ENCODE measurements at regions of chr5 and their contacts with region 1.

Region 1: GRCh38 chr5:66144074-66144833 is at the start of gene SREK1:
- DNase-seq: peak; percentile 84 to 90 (median 89)
- ATAC-seq: peak; percentile 91
- H3K4me3 ChIP-seq: peak within 1 kb of the TSS; percentile 80
- H3K4me3 Mint-ChIP-seq: peak within 1 kb of the TSS; percentile 91 to 100 (median 98)
- H3K27ac ChIP-seq: peak within 1 kb of the TSS; percentile 98
- H3K27ac Mint-ChIP-seq: peak within 1 kb of the TSS; percentile 99 to 100 (median 100)
- H3K4me1 ChIP-seq: peaks cover 21 to 34% of the 10 kb centered on the region in 2 donors
- H3K4me1 Mint-ChIP-seq: peaks cover 22 to 60% (median 47%) of the 10 kb centered on the region in 7 donors
- H3K27me3 ChIP-seq: no peaks in the 10 kb centered on the region
- H3K27me3 Mint-ChIP-seq: no peaks in the 10 kb centered on the region
- total RNA-seq, gene SREK1: 68.2 to 143 (median 85.8) TPM

Region 2: GRCh38 chr5:64768358-64769312 is 1375.6 kb before region 1 on chr5 and contains the starts of genes CWC27 and SREK1IP1:
- CTCF ChIA-PET with region 1: no interaction called
- POLR2A ChIA-PET with region 1: no interaction called
- intact Hi-C with region 1: loop called in 1 of 2 experiments (anchors 5 kb)
- DNase-seq: peak; percentile 65 to 88 (median 83)
- ATAC-seq: peak; percentile 98
- H3K4me3 ChIP-seq: peak within 1 kb of the TSS; percentile 90
- H3K4me3 Mint-ChIP-seq: peak within 1 kb of the TSS; percentile 94 to 100 (median 99)
- H3K27ac ChIP-seq: peak within 1 kb of the TSS; percentile 88
- H3K27ac Mint-ChIP-seq: peak within 1 kb of the TSS; percentile 96 to 100 (median 98)
- H3K4me1 ChIP-seq: peaks cover 21 to 37% of the 10 kb centered on the region in 2 donors
- H3K4me1 Mint-ChIP-seq: peaks cover 34 to 80% (median 77%) of the 10 kb centered on the region in 7 donors
- H3K27me3 ChIP-seq: no peaks in the 10 kb centered on the region
- H3K27me3 Mint-ChIP-seq: no peaks in the 10 kb centered on the region
- total RNA-seq, gene CWC27: 17.8 to 27.4 (median 21.0) TPM
- total RNA-seq, gene SREK1IP1: 11.7 to 29.9 (median 21.7) TPM

Region 3: GRCh38 chr5:65562731-65563701 is 581.2 kb before region 1 on chr5 and contains the starts of genes CENPK and PPWD1:
- CTCF ChIA-PET with region 1: no interaction called
- POLR2A ChIA-PET with region 1: interaction called, 5 read pairs
- intact Hi-C with region 1: loop called (anchors 1 kb)
- DNase-seq: peak; percentile 83 to 97 (median 94)
- ATAC-seq: peak; percentile 99
- H3K4me3 ChIP-seq: peak within 1 kb of the TSS; percentile 93
- H3K4me3 Mint-ChIP-seq: peak within 1 kb of the TSS; percentile 92 to 99 (median 96)
- H3K27ac ChIP-seq: peak within 1 kb of the TSS; percentile 93
- H3K27ac Mint-ChIP-seq: peak within 1 kb of the TSS; percentile 97 to 100 (median 98)
- H3K4me1 ChIP-seq: peaks cover 30% of the 10 kb centered on the region in 2 donors
- H3K4me1 Mint-ChIP-seq: peaks cover 22 to 79% (median 59%) of the 10 kb centered on the region in 7 donors
- H3K27me3 ChIP-seq: no peaks in the 10 kb centered on the region
- H3K27me3 Mint-ChIP-seq: no peaks in the 10 kb centered on the region
- total RNA-seq, gene CENPK: 7.2 to 78.8 (median 14.1) TPM
- total RNA-seq, gene PPWD1: 61.7 to 104 (median 81.2) TPM

Region 4: GRCh38 chr5:65721720-65722574 is 422.3 kb before region 1 on chr5 and contains the starts of genes NLN and SGTB:
- CTCF ChIA-PET with region 1: no interaction called
- POLR2A ChIA-PET with region 1: interaction called, 26 read pairs
- intact Hi-C with region 1: loop called (anchors 1 kb)
- DNase-seq: peak; percentile 65 to 93 (median 83)
- ATAC-seq: peak; percentile 97
- H3K4me3 ChIP-seq: peak within 1 kb of the TSS; percentile 75
- H3K4me3 Mint-ChIP-seq: peak within 1 kb of the TSS in 6 of 10 donors; percentile 85 to 97 (median 92)
- H3K27ac ChIP-seq: peak within 1 kb of the TSS; percentile 97
- H3K27ac Mint-ChIP-seq: peak within 1 kb of the TSS; percentile 74 to 91 (median 86)
- H3K4me1 ChIP-seq: peaks cover 22 to 33% of the 10 kb centered on the region in 2 donors
- H3K4me1 Mint-ChIP-seq: peaks cover 9 to 36% (median 15%) of the 10 kb centered on the region in 7 donors
- H3K27me3 ChIP-seq: no peaks in the 10 kb centered on the region
- H3K27me3 Mint-ChIP-seq: no peaks in the 10 kb centered on the region
- total RNA-seq, gene NLN: 3.5 to 11.9 (median 4.1) TPM
- total RNA-seq, gene SGTB: 12.8 to 59.5 (median 50.8) TPM

Region 5: DNA sequence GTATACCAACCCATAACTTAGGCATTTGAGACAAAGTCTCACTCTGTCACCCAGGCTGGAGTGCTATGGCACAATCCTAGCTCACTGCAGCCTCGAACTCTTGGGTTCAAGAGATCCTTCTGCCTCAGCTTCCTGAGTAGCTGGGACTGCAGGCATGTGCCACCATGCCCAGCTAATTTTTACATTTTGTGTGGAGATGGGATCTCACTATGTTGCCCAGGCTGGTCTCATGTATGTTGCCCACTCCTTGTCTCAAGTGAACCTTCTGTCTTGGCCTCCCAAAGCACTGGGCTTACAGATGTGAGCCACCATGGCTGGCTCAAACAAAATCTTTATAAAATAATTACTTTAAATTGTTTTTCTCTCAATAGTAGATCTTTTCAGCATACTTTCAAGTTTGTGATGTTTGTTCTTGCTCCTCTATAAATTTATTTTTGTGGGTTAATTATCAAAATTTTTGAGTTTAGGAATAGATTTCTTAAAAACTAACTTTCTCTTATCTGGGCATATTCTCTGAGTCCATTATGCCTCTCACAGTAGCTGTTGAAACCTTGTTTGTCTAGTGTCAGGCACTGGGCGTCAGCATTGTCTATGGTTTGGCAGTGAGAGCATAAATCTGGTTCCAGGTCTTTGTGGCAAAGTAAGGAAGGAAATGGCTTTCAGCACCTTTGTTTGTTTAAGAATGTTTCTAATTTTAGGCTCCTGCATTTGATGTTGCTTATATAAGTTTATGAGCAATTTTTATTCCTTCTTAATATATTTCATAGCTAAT is 383.6 kb before region 1 on chr5:
- CTCF ChIA-PET with region 1: no interaction called
- POLR2A ChIA-PET with region 1: interaction called, 4 read pairs
- intact Hi-C with region 1: loop called (anchors 1 kb)
- DNase-seq: peak in 7 of 9 donors; percentile 53 to 81 (median 67)
- ATAC-seq: peak; percentile 95
- H3K4me3 ChIP-seq: no peak overlapping the region
- H3K4me3 Mint-ChIP-seq: peak overlapping the region in 3 of 10 donors; percentile 2 to 24 (median 4)
- H3K27ac ChIP-seq: no peak overlapping the region
- H3K27ac Mint-ChIP-seq: peak overlapping the region in 3 of 9 donors; percentile 0 to 68 (median 23)
- H3K4me1 ChIP-seq: peaks cover 0 to 4% of the 10 kb centered on the region in 2 donors
- H3K4me1 Mint-ChIP-seq: peaks cover 3 to 10% (median 6%) of the 10 kb centered on the region in 7 donors
- H3K27me3 ChIP-seq: no peaks in the 10 kb centered on the region
- H3K27me3 Mint-ChIP-seq: no peaks in the 10 kb centered on the region

Region 6: GRCh38 chr5:66072031-66072430 is 72.2 kb before region 1 on chr5:
- CTCF ChIA-PET with region 1: no interaction called
- POLR2A ChIA-PET with region 1: no interaction called
- intact Hi-C with region 1: no loop called
- DNase-seq: no peak
- ATAC-seq: no peak
- H3K4me3 ChIP-seq: no peak overlapping the region
- H3K4me3 Mint-ChIP-seq: peak overlapping the region in 1 of 10 donors; percentile 27
- H3K27ac ChIP-seq: no peak overlapping the region
- H3K27ac Mint-ChIP-seq: peak overlapping the region in 3 of 9 donors; percentile 3 to 60 (median 58)
- H3K4me1 ChIP-seq: no peaks in the 10 kb centered on the region
- H3K4me1 Mint-ChIP-seq: peaks cover 0 to 24% (median 3%) of the 10 kb centered on the region in 7 donors
- H3K27me3 ChIP-seq: no peaks in the 10 kb centered on the region
- H3K27me3 Mint-ChIP-seq: no peaks in the 10 kb centered on the region

Region 7: GRCh38 chr5:66161356-66161755 is 17.1 kb after region 1 on chr5:
- CTCF ChIA-PET with region 1: no interaction called
- POLR2A ChIA-PET with region 1: interaction called, 10 read pairs
- intact Hi-C with region 1: loop called in 1 of 2 experiments (anchors 2 kb)
- DNase-seq: no peak
- ATAC-seq: no peak
- H3K4me3 ChIP-seq: no peak overlapping the region
- H3K4me3 Mint-ChIP-seq: no peak overlapping the region
- H3K27ac ChIP-seq: no peak overlapping the region
- H3K27ac Mint-ChIP-seq: no peak overlapping the region
- H3K4me1 ChIP-seq: no peaks in the 10 kb centered on the region
- H3K4me1 Mint-ChIP-seq: peaks cover 3 to 19% (median 14%) of the 10 kb centered on the region in 7 donors
- H3K27me3 ChIP-seq: no peaks in the 10 kb centered on the region
- H3K27me3 Mint-ChIP-seq: no peaks in the 10 kb centered on the region

Region 8: DNA sequence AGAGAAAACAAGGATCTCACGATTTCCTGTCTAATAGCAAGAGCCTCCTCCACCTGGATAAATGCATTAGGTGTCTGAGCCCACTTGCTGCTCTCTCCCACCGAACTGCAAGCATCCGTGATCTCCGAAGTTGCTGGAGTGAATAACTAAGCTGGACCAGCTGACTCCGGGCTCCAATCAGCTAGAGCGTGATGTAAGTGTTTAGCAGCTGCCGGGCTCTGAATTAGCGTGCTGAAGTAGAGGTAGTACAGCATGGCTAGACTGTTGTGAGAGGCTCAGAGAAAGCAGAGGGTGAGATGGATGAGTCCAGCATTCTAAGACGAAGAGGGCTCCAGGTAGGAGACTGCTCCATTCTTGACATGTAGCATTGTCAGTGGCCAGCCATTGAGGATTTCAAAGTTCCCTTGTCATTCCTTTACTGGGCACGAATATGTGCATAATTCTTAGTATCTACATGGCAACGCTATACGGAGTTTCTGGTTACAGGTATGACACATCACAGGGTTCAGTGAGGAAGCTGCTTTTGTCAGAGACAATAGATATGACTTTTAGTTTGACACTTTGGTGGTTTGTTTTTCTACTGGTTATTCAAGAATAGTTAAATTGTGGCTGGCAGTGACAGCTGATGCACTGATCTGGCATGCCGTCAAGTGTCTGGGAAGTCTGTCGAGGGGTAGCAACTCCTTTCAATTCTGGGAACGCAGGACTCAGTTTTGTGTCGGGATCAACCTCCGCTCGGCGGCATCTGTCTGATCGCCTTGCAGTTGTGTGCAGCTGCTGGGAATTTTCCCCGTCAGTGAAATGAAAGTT is 684.5 kb after region 1 on chr5:
- CTCF ChIA-PET with region 1: no interaction called
- POLR2A ChIA-PET with region 1: no interaction called
- intact Hi-C with region 1: loop called in 1 of 2 experiments (anchors 10 kb)
- DNase-seq: peak; percentile 14 to 67 (median 55)
- ATAC-seq: peak; percentile 93
- H3K4me3 ChIP-seq: peak overlapping the region; percentile 36
- H3K4me3 Mint-ChIP-seq: peak overlapping the region; percentile 72 to 95 (median 84)
- H3K27ac ChIP-seq: peak overlapping the region; percentile 31
- H3K27ac Mint-ChIP-seq: peak overlapping the region; percentile 12 to 92 (median 71)
- H3K4me1 ChIP-seq: peaks cover 0 to 4% of the 10 kb centered on the region in 2 donors
- H3K4me1 Mint-ChIP-seq: peaks cover 12 to 69% (median 19%) of the 10 kb centered on the region in 7 donors
- H3K27me3 ChIP-seq: no peaks in the 10 kb centered on the region
- H3K27me3 Mint-ChIP-seq: peaks cover 0 to 50% (median 26%) of the 10 kb centered on the region in 5 donors

Measured in naive thymus-derived CD4-positive, alpha-beta T cell (primary cell).